ENCODE measurements at regions of chr5 and their contacts with region 1.

Region 1: GRCh38 chr5:160269017-160269416 is 39.7 kb downstream of the FABP6 start:
- DNase-seq: peak; percentile 86 to 94
- ATAC-seq: peak; percentile 92 to 98 (median 96)
- H3K4me3 ChIP-seq: peak overlapping the region in 3 of 10 donors; percentile 2 to 11 (median 11)
- H3K27ac ChIP-seq: peak overlapping the region in 9 of 10 donors; percentile 54 to 82 (median 72)
- H3K4me1 ChIP-seq: peaks cover 5 to 49% (median 40%) of the 10 kb centered on the region in 9 donors
- H3K27me3 ChIP-seq: no peaks in the 10 kb centered on the region
- CTCF ChIP-seq: no peak

Region 2: GRCh38 chr5:160287378-160288051 is 18.5 kb after region 1 on chr5:
- intact Hi-C with region 1: loop called in 1 of 10 experiments (anchors 1 kb)
- DNase-seq: peak; percentile 82 to 87
- ATAC-seq: peak; percentile 90 to 98 (median 96)
- H3K4me3 ChIP-seq: no peak overlapping the region
- H3K27ac ChIP-seq: peak overlapping the region; percentile 24 to 88 (median 83)
- H3K4me1 ChIP-seq: peaks cover 5 to 49% (median 31%) of the 10 kb centered on the region in 9 donors
- H3K27me3 ChIP-seq: no peaks in the 10 kb centered on the region
- CTCF ChIP-seq: no peak

Region 3: DNA sequence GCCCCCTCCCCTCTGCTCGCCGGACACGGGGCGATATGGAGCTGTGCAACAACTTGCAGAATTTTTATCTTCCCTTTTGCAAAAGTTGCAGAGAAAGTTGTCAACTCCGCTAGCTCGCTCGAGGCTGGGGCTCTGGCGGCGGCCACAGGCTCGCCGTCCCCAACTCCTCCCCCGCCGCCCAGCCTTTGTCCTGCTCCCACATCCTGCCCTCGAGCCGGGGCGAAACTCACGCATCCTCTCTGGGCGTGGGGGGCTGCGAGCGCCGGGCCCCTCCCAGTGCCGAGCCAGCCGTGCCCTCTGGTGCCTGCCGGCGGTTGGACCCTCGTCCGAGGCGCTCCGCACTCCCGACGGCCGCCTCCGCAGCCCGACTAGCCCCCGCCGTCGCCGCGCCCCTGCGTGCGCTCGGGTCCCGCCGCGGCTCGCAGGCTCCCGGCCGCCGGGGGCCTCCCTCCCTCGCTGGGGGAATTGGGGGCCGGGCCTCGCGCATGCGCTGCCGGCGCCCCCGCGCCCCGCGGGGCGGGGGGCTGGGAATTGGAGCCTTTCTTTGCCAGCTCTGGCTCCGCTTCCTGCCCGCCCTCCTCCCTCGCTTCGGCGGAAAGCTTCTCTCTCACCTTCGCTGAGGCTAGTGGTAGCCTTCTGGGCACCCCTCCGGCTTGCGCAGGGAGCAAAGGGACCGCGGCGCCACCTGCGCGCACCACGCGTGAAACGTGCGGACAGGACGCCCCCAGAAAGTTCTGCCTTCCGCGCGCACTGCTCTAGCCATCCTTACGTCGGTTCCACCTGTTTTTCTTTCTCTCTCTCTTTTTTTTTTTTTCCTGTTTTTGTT is 43.3 kb after region 1 on chr5 and contains the start of gene CCNJL:
- intact Hi-C with region 1: loop called in 4 of 10 experiments (anchors 5 to 10 kb)
- DNase-seq: peak; percentile 63 to 70
- ATAC-seq: peak; percentile 72 to 85 (median 80)
- H3K4me3 ChIP-seq: peak within 1 kb of the TSS; percentile 58 to 96 (median 82)
- H3K27ac ChIP-seq: peak within 1 kb of the TSS in 9 of 10 donors; percentile 76 to 92 (median 87)
- H3K4me1 ChIP-seq: peaks cover 0 to 33% (median 12%) of the 10 kb centered on the region in 9 donors
- H3K27me3 ChIP-seq: peaks cover 0 to 45% (median 0%) of the 10 kb centered on the region in 7 donors
- CTCF ChIP-seq: no peak
- total RNA-seq, gene CCNJL: 4.5 to 20.8 (median 7.0) TPM